Vagina (tissue), 2 donors: ENCODE measurements at regions of chr14 and their contacts with region 1.

Region 1: GRCh38 chr14:63852817-63853731 is at the start of gene SYNE2:
- DNase-seq: no peak
- H3K4me3 ChIP-seq: peak within 1 kb of the TSS; percentile 83 to 85
- H3K27ac ChIP-seq: peak within 1 kb of the TSS; percentile 97
- H3K4me1 ChIP-seq: peaks cover 20% of the 10 kb centered on the region
- H3K27me3 ChIP-seq: no peaks in the 10 kb centered on the region
- CTCF ChIP-seq: no peak
- POLR2A ChIP-seq: peak in 1 of 2 donors; percentile 50
- total RNA-seq, gene SYNE2: 145 TPM

Region 2: DNA sequence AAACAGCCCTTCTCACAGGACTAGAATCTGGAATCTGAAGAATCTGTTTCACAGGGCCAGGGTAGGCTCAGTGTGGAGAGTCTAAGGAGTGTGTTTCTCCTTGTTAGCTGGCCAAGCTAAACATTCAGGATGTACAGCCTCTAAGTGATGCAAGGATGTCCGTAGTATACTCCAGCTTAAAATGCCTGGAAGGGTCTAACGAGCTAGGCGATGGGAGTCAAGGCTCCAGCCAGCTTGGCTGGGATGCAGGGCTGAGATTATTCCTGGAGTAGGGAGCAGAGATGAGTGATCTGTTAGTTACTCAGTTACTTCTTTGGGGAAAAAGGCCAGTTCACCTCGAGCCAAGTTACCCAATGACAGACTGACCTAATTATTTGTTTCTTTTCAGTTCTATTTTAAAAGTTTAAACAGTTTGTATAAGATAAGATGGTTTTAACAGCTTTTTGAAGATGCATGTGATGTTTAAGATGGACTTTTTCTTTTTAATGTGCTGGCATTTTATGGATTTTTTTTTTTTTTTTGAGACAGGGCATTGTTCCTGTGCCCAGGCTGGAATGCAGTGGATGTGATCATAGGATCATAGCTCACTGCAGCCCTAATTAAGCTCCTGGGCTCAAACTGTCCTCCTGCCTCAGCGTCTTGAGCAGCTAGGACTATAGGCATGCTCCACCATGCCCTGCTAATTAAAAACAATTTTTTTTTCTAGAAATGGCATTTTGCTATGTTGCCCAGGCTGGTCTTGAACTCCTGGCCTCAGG is 40.8 kb after region 1 on chr14:
- intact Hi-C with region 1: loop called (anchors 5 kb)
- DNase-seq: no peak
- H3K4me3 ChIP-seq: no peak overlapping the region
- H3K27ac ChIP-seq: peak overlapping the region; percentile 25
- H3K4me1 ChIP-seq: peaks cover 77% of the 10 kb centered on the region
- H3K27me3 ChIP-seq: no peaks in the 10 kb centered on the region
- CTCF ChIP-seq: no peak
- POLR2A ChIP-seq: no peak

Region 3: GRCh38 chr14:63952933-63953437 is 99.9 kb after region 1 on chr14:
- intact Hi-C with region 1: loop called (anchors 10 kb)
- DNase-seq: no peak
- H3K4me3 ChIP-seq: no peak overlapping the region
- H3K27ac ChIP-seq: no peak overlapping the region
- H3K4me1 ChIP-seq: no peaks in the 10 kb centered on the region
- H3K27me3 ChIP-seq: no peaks in the 10 kb centered on the region
- CTCF ChIP-seq: no peak
- POLR2A ChIP-seq: no peak

Region 4: GRCh38 chr14:64060648-64061096 is 207.6 kb after region 1 on chr14:
- intact Hi-C with region 1: no loop called
- DNase-seq: no peak
- H3K4me3 ChIP-seq: no peak overlapping the region
- H3K27ac ChIP-seq: no peak overlapping the region
- H3K4me1 ChIP-seq: no peaks in the 10 kb centered on the region
- H3K27me3 ChIP-seq: no peaks in the 10 kb centered on the region
- CTCF ChIP-seq: no peak
- POLR2A ChIP-seq: no peak